Brain microvascular endothelial cell (primary cell): ENCODE measurements at regions of chr7 and their contacts with region 1.

Region 1: GRCh38 chr7:55255496-55256435 is 109.4 kb upstream of the LANCL2 start:
- DNase-seq: peak; percentile 76
- H3K4me3 ChIP-seq: peak overlapping the region; percentile 56
- H3K27ac ChIP-seq: peak overlapping the region; percentile 7
- H3K27me3 ChIP-seq: peaks cover 2% of the 10 kb centered on the region
- CTCF ChIP-seq: peak; percentile 68

Region 2: GRCh38 chr7:54788664-54789063 is 467.1 kb before region 1 on chr7:
- in situ Hi-C with region 1: loop called (anchors 25 kb)
- DNase-seq: peak; percentile 87
- H3K4me3 ChIP-seq: no peak overlapping the region
- H3K27ac ChIP-seq: no peak overlapping the region
- H3K27me3 ChIP-seq: no peaks in the 10 kb centered on the region
- CTCF ChIP-seq: peak; percentile 82

Region 3: DNA sequence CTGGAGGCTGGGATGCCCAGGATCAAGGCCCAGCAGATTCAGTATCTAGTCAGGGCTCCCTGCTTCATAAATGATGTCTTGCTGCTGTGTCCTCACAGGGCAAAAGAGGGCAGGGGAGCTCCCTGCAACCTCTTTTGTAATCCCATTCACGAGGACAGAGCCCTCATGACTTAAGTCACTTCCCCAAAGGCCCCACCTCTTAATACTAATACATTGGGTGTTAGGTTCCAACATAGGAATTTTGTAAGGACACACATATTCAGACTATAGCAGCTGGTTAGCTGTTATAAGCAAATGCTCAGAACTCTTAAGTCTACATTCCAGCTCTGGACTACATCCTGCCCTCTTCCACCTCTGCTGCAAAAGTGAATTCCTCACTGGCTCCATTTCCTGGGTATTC is 253.6 kb after region 1 on chr7:
- in situ Hi-C with region 1: no loop called
- DNase-seq: peak; percentile 19
- H3K4me3 ChIP-seq: no peak overlapping the region
- H3K27ac ChIP-seq: peak overlapping the region; percentile 52
- H3K27me3 ChIP-seq: no peaks in the 10 kb centered on the region
- CTCF ChIP-seq: no peak

Region 4: DNA sequence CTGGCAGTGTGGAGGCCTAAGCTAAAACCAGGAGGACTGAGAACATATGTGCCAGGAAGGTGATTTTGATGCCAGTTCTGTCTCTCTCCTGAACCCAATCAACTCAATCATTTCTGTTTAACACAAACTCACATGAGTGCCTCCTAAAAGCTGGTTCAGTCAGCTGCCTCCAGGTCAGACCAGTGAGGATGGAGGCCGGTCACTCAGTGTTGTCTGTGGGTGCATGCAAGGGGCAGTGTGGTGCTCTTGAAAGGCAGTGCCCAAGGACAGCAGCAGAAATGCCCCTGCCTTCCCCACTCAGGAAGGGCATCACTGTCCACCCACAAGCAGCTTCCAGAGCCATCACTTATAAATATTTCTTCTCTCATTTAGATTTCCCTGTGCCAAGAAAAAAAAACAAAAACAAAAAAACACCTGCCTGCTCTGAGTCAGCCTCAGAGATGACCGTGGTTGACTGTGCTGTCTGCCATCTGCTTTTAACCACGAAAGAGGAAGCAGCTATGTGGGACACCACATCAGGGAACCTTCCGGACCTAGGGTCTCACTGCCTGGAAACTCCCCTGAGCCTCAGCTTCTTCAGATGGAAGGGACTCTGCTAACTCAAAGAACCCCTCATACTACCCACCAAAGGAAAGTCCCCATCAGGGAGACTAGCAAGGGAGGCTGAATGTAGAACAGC is 277.4 kb after region 1 on chr7:
- in situ Hi-C with region 1: no loop called
- DNase-seq: peak; percentile 37
- H3K4me3 ChIP-seq: no peak overlapping the region
- H3K27ac ChIP-seq: peak overlapping the region; percentile 65
- H3K27me3 ChIP-seq: no peaks in the 10 kb centered on the region
- CTCF ChIP-seq: no peak